Panc1 (cell line): ENCODE measurements at regions of chr1 and their contacts with region 1.

Region 1: GRCh38 chr1:15835741-15836510 is 11.6 kb upstream of the SPEN start:
- DNase-seq: peak; percentile 98
- ATAC-seq: peak; percentile 73
- H3K4me3 ChIP-seq: peak overlapping the region; percentile 65 to 91
- H3K27ac ChIP-seq: peak overlapping the region; percentile 95
- H3K4me1 ChIP-seq: peaks cover 24% of the 10 kb centered on the region
- H3K27me3 ChIP-seq: no peaks in the 10 kb centered on the region
- CTCF ChIP-seq: no peak

Region 2: DNA sequence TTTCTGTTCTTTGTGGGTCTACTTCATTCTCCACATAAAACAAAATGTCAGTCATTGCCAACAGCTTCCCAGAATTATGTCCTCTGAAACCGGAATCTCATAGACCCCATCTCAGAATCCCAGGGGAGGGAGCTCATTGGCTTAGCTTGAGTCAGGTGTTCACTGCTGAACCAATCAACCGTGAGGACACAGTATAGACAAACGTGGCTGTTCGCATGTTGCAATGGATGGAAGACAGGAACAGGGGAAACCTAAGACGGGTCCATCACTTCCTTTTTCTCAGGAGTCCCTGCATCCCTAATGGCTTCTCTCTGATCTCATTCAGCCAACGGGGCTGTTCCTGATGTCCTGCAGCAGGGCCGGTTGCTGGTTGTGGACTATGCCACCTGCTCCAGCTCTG is 370.3 kb before region 1 on chr1:
- CTCF ChIA-PET with region 1: no interaction called
- POLR2A ChIA-PET with region 1: no interaction called
- in situ Hi-C with region 1: no loop called
- intact Hi-C with region 1: no loop called
- DNase-seq: no peak
- ATAC-seq: no peak
- H3K4me3 ChIP-seq: no peak overlapping the region
- H3K27ac ChIP-seq: no peak overlapping the region
- H3K4me1 ChIP-seq: no peaks in the 10 kb centered on the region
- H3K27me3 ChIP-seq: no peaks in the 10 kb centered on the region
- CTCF ChIP-seq: no peak

Region 3: DNA sequence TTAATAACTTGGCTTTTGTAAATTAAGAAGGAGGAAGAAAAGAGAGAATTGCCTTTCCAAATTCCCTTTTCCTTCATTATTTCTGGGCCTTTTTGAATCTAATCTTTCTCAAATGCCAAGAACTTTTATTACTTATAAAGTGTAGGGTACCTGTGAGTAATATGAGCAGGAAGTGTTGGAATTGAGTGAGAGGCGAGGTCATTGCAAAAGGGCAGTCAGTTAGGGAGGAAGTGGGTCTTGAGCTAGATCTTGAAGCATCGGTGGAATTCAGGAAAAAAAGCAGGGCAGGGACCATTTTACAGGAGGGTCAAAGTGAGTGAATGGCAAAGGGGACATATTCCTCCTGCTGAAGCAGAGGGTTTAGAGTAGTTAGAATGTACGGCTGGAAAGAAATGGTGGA is 195.3 kb before region 1 on chr1:
- CTCF ChIA-PET with region 1: no interaction called
- POLR2A ChIA-PET with region 1: no interaction called
- in situ Hi-C with region 1: no loop called
- intact Hi-C with region 1: no loop called
- DNase-seq: no peak
- ATAC-seq: no peak
- H3K4me3 ChIP-seq: no peak overlapping the region
- H3K27ac ChIP-seq: no peak overlapping the region
- H3K4me1 ChIP-seq: no peaks in the 10 kb centered on the region
- H3K27me3 ChIP-seq: no peaks in the 10 kb centered on the region
- CTCF ChIP-seq: no peak

Region 4: GRCh38 chr1:15796086-15796462 is 39.9 kb before region 1 on chr1:
- CTCF ChIA-PET with region 1: no interaction called
- POLR2A ChIA-PET with region 1: interaction called, 23 read pairs
- in situ Hi-C with region 1: no loop called
- intact Hi-C with region 1: no loop called
- DNase-seq: no peak
- ATAC-seq: no peak
- H3K4me3 ChIP-seq: no peak overlapping the region
- H3K27ac ChIP-seq: peak overlapping the region; percentile 93
- H3K4me1 ChIP-seq: peaks cover 72% of the 10 kb centered on the region
- H3K27me3 ChIP-seq: no peaks in the 10 kb centered on the region
- CTCF ChIP-seq: no peak

Region 5: GRCh38 chr1:15810073-15810472 is 25.9 kb before region 1 on chr1:
- CTCF ChIA-PET with region 1: interaction called, 8 read pairs
- POLR2A ChIA-PET with region 1: interaction called, 10 read pairs
- in situ Hi-C with region 1: no loop called
- intact Hi-C with region 1: no loop called
- DNase-seq: no peak
- ATAC-seq: no peak
- H3K4me3 ChIP-seq: no peak overlapping the region
- H3K27ac ChIP-seq: peak overlapping the region; percentile 3; the same call in 1 of the 2 replicates
- H3K4me1 ChIP-seq: peaks cover 9% of the 10 kb centered on the region; the same call in 1 of the 2 replicates
- H3K27me3 ChIP-seq: no peaks in the 10 kb centered on the region
- CTCF ChIP-seq: no peak

Region 6: DNA sequence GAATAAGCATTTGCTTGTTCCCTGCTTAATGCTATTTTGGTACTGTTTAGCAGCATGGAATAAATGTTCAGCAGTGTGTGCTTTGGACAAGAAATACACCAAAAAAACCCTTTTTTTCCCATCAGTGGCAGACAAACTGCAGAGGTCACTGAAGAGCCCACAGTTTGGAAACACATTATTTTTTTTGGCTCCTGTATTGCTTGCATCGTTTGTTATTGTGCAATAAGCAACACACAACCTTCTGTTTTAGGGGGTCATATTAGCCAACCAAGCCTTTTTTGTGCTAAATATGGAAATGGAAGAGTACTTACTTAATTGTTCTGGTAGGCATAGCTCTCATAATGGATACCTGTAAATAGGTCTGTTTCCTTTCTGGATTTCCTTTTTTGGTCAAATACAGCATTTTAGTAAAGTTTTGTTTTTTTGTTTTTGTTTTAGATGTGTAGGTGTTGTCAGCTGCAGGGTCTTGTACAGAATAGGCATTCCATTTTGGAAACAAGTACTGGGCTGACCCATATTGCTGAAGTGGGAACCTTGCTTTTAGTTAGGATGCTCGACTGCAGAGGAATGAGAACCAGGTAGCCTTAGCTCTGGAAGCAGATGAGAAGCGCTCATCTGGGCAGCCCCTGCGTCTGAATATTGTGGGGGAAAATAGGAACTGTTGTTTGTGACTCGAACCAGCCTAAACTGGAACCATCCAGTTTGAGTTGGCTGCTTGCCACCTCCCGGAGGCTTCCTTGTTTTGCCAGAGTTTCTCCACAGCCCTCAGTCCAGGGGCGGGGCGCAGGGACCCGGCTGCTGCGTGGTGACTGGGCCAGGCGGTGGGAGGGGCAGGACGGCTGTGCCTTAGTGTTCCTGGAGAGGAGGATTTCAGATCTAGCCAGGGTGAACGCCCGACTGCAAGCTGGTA is 50.0 kb after region 1 on chr1:
- CTCF ChIA-PET with region 1: interaction called, 7 read pairs
- POLR2A ChIA-PET with region 1: interaction called, 13 read pairs
- in situ Hi-C with region 1: no loop called
- intact Hi-C with region 1: no loop called
- DNase-seq: peak; percentile 55
- ATAC-seq: peak; percentile 96
- H3K4me3 ChIP-seq: peak overlapping the region; percentile 21 to 57
- H3K27ac ChIP-seq: peak overlapping the region; percentile 64
- H3K4me1 ChIP-seq: peaks cover 32% of the 10 kb centered on the region
- H3K27me3 ChIP-seq: no peaks in the 10 kb centered on the region
- CTCF ChIP-seq: no peak

Region 7: DNA sequence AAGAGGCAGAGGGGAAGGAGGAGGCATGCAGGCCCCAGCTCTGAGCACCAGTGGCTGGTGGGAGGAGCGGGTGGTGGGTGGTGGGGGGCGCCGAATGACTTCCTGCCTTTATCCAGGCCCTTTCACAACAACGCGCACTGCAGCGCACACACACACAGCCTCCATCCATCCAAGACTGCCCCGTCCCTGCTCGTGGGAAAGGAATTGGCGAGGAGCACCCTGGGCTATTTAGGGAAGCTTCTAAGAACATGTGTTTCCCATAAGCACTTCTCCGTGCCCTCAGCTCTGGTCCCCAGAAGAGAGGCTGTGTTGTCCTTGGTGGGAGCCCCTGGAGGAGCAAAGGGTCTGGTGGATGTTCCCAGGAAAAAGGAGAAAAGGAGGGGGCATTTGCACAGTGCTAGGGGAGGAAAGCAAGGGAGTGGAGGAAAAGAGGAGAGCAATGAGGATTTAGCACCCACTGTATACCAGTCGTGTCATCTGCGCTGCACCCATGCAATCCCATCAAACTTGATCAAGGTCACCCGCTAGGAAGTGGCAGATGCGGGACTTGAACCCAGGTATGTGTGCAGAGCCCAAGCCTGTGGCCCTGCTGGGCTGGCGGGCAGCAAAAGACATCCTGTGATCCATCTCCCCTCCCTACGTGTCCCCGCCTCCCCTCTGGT is 291.9 kb after region 1 on chr1:
- CTCF ChIA-PET with region 1: no interaction called
- POLR2A ChIA-PET with region 1: no interaction called
- in situ Hi-C with region 1: no loop called
- intact Hi-C with region 1: no loop called
- DNase-seq: no peak
- ATAC-seq: no peak
- H3K4me3 ChIP-seq: no peak overlapping the region
- H3K27ac ChIP-seq: peak overlapping the region; percentile 84
- H3K4me1 ChIP-seq: peaks cover 87% of the 10 kb centered on the region
- H3K27me3 ChIP-seq: no peaks in the 10 kb centered on the region
- CTCF ChIP-seq: no peak